Spleen (tissue), 13 donors: ENCODE measurements at regions of chr17 and their contacts with region 1.

Region 1: GRCh38 chr17:78013683-78014467 is 55.4 kb downstream of the TNRC6C start:
- DNase-seq: no peak
- H3K4me3 ChIP-seq: no peak overlapping the region
- H3K27ac ChIP-seq: no peak overlapping the region
- H3K4me1 ChIP-seq: peaks cover 0 to 25% (median 8%) of the 10 kb centered on the region in 6 donors
- H3K27me3 ChIP-seq: no peaks in the 10 kb centered on the region
- CTCF ChIP-seq: peak; percentile 42 to 82 (median 74)
- POLR2A ChIP-seq: no peak

Region 2: GRCh38 chr17:77542551-77543490 is 471.1 kb before region 1 on chr17:
- intact Hi-C with region 1: loop called (anchors 2 kb)
- DNase-seq: peak; percentile 82
- H3K4me3 ChIP-seq: no peak overlapping the region
- H3K27ac ChIP-seq: no peak overlapping the region
- H3K4me1 ChIP-seq: peaks cover 0 to 16% (median 5%) of the 10 kb centered on the region in 6 donors
- H3K27me3 ChIP-seq: peaks cover 0 to 36% (median 8%) of the 10 kb centered on the region in 7 donors
- CTCF ChIP-seq: peak; percentile 64 to 82 (median 74)
- POLR2A ChIP-seq: no peak

Region 3: DNA sequence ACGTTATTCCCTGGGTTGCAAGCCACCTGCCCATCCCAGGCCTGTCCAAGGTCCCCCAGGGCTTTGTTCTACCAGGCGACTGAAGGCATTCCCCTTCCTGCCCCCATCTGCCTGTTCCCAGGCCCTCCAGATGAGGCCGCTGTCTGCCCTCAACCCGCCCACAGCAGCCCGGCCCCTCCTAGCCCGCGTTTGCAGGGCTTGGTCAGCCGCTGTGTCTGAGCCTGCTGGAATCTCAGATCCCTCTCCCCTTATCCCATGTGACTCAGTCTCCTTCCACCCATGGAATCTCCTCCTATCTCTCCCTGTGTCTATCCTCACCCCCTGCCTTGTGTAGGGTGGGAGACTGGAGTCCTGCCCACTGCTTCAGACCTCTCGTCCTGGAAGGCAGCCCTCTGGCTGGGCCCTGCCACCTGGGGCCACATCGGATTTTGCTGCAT is 241.4 kb before region 1 on chr17:
- intact Hi-C with region 1: loop called (anchors 2 kb)
- DNase-seq: peak; percentile 91
- H3K4me3 ChIP-seq: no peak overlapping the region
- H3K27ac ChIP-seq: no peak overlapping the region
- H3K4me1 ChIP-seq: peaks cover 0 to 15% (median 8%) of the 10 kb centered on the region in 6 donors
- H3K27me3 ChIP-seq: peaks cover 0 to 21% (median 0%) of the 10 kb centered on the region in 7 donors
- CTCF ChIP-seq: peak; percentile 63 to 92 (median 80)
- POLR2A ChIP-seq: no peak

Region 4: DNA sequence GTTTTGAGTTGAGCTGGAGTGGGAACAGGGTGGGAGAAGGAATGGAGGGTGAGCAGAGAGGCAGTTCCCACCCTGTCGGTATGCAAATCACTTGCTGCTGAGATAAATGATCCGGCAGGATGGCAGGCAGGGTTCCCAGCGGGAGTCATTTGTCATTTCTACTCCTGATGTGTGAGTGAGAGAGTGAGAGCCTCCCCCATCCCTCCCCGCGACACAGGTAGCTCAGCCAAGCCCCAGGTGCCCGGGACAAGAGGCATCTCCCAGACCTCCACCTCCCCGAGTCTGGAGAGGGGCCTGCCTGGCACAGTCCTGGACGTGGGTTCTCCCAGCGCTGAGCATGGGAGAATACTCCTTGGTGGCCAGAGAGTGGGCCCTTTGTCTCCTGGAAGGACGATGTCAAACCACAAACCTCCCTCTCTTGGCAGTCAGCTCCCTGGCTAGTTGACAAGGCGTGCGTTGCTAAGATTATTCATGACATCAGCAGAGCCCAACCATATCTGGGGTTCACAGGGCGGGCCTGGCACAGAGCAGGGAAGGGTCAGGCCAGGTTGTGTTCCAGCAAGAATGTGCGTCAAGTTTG is 89.0 kb before region 1 on chr17:
- intact Hi-C with region 1: no loop called
- DNase-seq: no peak
- H3K4me3 ChIP-seq: no peak overlapping the region
- H3K27ac ChIP-seq: no peak overlapping the region
- H3K4me1 ChIP-seq: peaks cover 0 to 5% (median 0%) of the 10 kb centered on the region in 6 donors
- H3K27me3 ChIP-seq: peaks cover 0 to 87% (median 6%) of the 10 kb centered on the region in 7 donors
- CTCF ChIP-seq: no peak
- POLR2A ChIP-seq: no peak

Region 5: DNA sequence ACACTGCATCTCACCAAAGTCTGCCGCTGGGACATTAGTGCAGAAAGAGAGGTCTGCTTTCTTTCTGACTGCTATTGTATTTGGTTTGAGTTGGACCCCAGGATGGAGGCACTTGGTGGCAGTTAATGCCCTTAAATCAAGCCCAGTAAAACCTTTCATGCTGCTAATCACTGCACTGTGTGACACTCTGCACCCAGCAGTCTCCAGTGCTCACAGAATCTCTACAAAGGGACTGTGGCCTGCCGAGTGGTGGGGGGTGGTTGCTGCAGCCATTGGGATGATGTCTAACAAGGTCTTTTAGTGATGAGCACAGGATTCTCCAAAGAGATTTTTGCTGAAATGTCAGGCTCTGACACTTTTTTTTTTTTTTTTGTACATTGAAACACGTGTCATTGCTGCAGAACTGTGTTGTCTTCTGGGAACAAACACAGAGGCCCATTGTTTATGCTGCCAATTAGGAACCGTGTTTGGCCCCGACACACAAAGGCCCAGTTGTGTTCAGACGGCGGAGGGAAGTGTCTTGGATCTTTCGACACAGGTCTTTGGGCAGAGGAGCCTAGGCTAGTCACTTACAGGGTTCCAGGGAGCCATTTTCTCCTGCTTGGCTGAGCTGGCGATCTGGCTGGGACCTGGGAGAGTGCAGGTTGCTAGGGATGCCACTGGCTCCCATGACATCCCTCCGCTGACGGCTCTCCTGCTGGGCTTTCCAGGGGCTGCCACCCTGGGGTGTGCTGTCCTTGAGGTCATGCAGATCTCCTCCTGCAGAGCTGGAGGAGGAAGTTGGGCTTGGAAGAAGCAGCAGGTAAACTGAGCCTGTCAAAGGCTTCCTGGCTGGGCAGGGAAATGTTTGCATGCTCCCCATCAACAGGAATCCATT is 71.5 kb before region 1 on chr17:
- intact Hi-C with region 1: no loop called
- DNase-seq: no peak
- H3K4me3 ChIP-seq: no peak overlapping the region
- H3K27ac ChIP-seq: no peak overlapping the region
- H3K4me1 ChIP-seq: peaks cover 0 to 7% (median 0%) of the 10 kb centered on the region in 6 donors
- H3K27me3 ChIP-seq: peaks cover 0 to 49% (median 0%) of the 10 kb centered on the region in 7 donors
- CTCF ChIP-seq: no peak
- POLR2A ChIP-seq: no peak